ENCODE measurements at regions of chr19 and their contacts with region 1.

Region 1: GRCh38 chr19:21505459-21506451 is at the start of gene ZNF429:
- DNase-seq: peak; percentile 83 to 98 (median 94)
- H3K4me3 ChIP-seq: peak within 1 kb of the TSS; percentile 64 to 97 (median 85)
- H3K27ac ChIP-seq: peak within 1 kb of the TSS; percentile 73 to 99 (median 93)
- H3K27me3 ChIP-seq: no peaks in the 10 kb centered on the region
- CTCF ChIP-seq: peak in 21 of 56 donors; percentile 6 to 39 (median 20)
- total RNA-seq, gene ZNF429: 20.6 to 45.8 (median 31.2) TPM

Region 2: DNA sequence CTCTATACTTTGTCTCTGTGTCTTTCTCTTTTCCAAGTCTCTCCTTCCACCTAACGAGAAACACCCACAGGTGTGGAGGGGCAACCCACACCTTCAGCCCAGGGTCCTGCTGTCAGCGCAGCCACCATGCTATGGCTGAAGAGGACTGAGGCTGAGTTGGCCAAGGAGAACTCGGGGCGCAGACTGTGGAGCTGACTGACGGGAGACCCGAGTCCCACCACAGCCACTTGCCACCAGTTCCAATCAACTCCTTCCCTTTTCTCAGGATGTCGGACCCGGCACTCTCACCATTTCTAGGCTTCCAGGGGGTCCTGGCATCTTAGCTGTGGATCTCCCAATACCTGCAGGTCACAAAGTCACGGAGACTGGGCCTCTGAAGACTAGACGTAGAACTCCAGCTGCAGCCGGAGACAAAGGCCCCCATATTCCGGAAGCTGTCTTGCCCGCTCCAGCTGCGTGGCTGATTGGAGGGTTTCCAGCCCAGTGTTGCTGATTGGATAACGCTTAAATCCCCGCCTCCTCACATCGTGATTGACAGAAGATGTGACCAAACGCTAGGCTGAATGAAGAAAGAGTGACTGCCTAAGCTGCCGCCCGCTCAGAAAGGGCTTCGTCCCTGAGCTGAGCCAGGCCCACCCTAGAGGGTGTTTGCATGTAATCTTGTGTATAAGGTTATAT is 63.2 kb after region 1 on chr19:
- intact Hi-C with region 1: loop called in 1 of 2 experiments (anchors 5 kb)
- DNase-seq: peak; percentile 55 to 95 (median 82)
- H3K4me3 ChIP-seq: peak overlapping the region in 57 of 59 donors; percentile 9 to 87 (median 60)
- H3K27ac ChIP-seq: peak overlapping the region in 47 of 59 donors; percentile 2 to 96 (median 79)
- H3K27me3 ChIP-seq: peaks cover 0 to 2% (median 0%) of the 10 kb centered on the region in 45 donors
- CTCF ChIP-seq: peak in 6 of 56 donors; percentile 9 to 22 (median 12)

Region 3: GRCh38 chr19:21698215-21698614 is 192.5 kb after region 1 on chr19:
- intact Hi-C with region 1: no loop called
- DNase-seq: no peak
- H3K4me3 ChIP-seq: no peak overlapping the region
- H3K27ac ChIP-seq: no peak overlapping the region
- H3K27me3 ChIP-seq: no peaks in the 10 kb centered on the region
- CTCF ChIP-seq: peak; percentile 16 to 79 (median 62)

Region 4: GRCh38 chr19:21835810-21836444 is 330.2 kb after region 1 on chr19 and contains the start of gene ZNF43:
- intact Hi-C with region 1: loop called in 1 of 2 experiments (anchors 5 kb)
- DNase-seq: peak; percentile 92 to 99 (median 97)
- H3K4me3 ChIP-seq: peak within 1 kb of the TSS; percentile 57 to 92 (median 80)
- H3K27ac ChIP-seq: peak within 1 kb of the TSS; percentile 32 to 97 (median 90)
- H3K27me3 ChIP-seq: no peaks in the 10 kb centered on the region
- CTCF ChIP-seq: peak in 13 of 56 donors; percentile 7 to 38 (median 17)
- total RNA-seq, gene ZNF43: 10.9 to 29.1 (median 19.4) TPM